T-cell (primary cell): ENCODE measurements at regions of chr14 and their contacts with region 1.

Region 1: DNA sequence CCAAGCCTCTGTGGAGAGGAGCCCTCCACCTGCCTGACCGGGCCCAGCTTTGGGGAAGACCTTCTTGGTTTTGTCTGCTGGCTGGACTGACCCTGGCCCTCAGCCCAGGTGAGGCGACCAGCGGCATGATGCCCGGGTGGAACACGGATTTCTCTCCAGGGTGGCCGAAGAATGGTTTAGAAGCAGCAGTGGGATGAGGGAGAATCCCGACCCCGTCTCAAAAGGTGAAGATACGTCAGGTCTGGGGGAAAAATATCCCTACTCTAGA is 15.7 kb downstream of the ZBTB42 start:
- DNase-seq: no peak
- ATAC-seq: no peak
- H3K4me3 ChIP-seq: peak overlapping the region; percentile 63 to 71
- H3K4me3 Mint-ChIP-seq: peak overlapping the region; percentile 86 to 90 (median 87)
- H3K27ac ChIP-seq: peak overlapping the region; percentile 76
- H3K27ac Mint-ChIP-seq: peak overlapping the region; percentile 90 to 92
- H3K4me1 ChIP-seq: peaks cover 0 to 26% of the 10 kb centered on the region in 2 experiments
- H3K4me1 Mint-ChIP-seq: peaks cover 14 to 19% (median 19%) of the 10 kb centered on the region in 3 donors
- H3K27me3 ChIP-seq: no peaks in the 10 kb centered on the region
- H3K27me3 Mint-ChIP-seq: no peaks in the 10 kb centered on the region

Region 2: DNA sequence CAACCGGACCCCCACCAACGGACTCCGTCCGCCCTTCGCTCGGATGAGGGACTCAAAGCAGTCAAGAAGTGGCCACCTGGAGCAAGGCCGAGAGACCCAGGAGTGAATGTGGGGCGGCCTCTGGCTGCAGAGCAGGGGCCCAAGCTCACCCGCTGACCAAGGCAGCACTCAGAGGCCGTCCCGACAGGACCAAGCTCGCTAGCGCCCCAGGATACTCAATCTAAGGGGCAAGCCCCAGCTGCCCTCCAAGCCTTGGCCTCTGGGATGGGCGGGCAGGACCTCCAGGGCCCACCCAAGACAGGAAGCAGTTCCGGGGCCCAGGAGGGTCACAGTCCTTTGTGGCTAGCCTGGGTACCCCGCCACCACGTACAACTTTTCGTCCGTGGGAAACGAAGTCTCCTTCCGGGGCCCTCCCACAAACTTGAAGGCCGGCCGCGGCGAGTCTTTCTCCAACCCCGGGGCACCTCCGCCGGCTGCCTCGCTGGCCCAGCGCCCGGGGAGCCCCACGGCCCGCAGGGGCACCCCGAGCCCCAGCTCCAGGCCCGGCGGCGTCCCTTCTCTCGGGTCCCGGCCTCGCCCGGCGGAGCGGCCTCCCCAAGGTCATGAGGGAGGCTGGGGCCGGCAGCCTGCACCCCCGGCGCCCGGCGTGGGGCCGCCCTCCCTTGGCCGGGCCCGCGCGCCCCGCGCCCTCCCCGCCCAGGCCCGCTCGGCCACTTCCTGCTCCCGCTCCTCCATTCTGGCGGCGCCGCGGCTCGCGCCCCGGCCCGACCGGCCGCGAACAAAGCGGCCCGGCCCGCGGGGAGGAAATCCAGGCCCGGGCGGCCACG is 21.8 kb before region 1 on chr14:
- CTCF ChIA-PET with region 1: interaction called in 1 of 2 experiments, 11 read pairs
- POLR2A ChIA-PET with region 1: no interaction called
- DNase-seq: peak in 4 of 35 experiments; percentile 19 to 53 (median 22)
- ATAC-seq: peak; percentile 29 to 46 (median 42)
- H3K4me3 ChIP-seq: peak overlapping the region; percentile 69 to 75
- H3K4me3 Mint-ChIP-seq: peak overlapping the region; percentile 83 to 91 (median 85)
- H3K27ac ChIP-seq: no peak overlapping the region
- H3K27ac Mint-ChIP-seq: peak overlapping the region; percentile 80 to 85
- H3K4me1 ChIP-seq: peaks cover 6 to 63% of the 10 kb centered on the region in 2 experiments
- H3K4me1 Mint-ChIP-seq: peaks cover 45 to 51% (median 46%) of the 10 kb centered on the region in 3 donors
- H3K27me3 ChIP-seq: no peaks in the 10 kb centered on the region
- H3K27me3 Mint-ChIP-seq: no peaks in the 10 kb centered on the region

Region 3: DNA sequence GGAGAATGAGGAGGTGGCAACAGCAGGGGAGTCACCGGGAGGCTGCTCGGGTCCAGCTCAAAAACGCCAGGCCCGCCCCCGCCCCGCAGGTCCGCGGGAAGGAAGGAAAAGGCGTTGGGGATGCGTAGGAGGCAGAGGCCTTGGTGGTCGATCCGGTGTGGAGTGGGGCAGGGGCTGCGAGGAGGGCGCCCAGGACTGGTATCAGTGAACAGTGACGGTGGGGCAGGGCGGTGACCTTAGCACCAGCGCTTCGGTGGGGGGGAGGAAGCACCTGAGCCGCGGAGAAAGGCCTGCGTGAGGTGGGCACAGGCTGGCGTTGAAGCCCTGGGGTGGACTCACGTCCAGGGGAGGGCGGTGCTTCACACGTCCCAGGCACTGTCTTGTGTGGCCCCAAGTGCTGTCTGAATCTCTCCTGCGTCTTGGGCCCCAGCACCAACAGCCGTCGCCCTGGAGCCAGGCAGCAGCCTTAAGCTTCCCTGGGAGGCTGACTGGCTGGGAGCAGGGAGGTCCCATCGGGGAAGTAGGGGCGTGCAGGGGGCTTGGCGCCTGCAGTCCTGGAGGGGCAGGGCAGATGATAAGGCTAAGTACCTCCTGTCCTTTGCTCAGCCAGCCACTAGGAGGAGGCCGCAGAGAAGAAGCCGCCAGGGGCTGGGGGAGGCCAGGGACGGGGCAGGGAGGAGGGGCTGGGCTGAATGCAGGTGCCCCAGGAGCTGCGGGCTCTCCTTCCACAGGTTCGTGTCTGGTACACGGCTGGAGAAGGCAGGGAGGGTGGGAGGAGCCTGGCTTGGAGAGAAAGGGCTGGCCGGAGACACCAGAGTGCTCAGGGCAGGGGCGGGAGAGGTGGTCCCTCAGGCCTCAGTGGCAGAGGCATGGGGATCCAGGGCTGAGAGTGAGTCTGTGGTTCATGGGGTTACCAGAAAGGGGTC is 10.8 kb after region 1 on chr14:
- CTCF ChIA-PET with region 1: no interaction called
- POLR2A ChIA-PET with region 1: no interaction called
- DNase-seq: peak in 33 of 35 experiments; percentile 21 to 69 (median 45)
- ATAC-seq: peak; percentile 48 to 70 (median 56)
- H3K4me3 ChIP-seq: peak overlapping the region; percentile 37 to 65
- H3K4me3 Mint-ChIP-seq: peak overlapping the region; percentile 75 to 94 (median 79)
- H3K27ac ChIP-seq: no peak overlapping the region
- H3K27ac Mint-ChIP-seq: peak overlapping the region in 1 of 2 donors; percentile 52
- H3K4me1 ChIP-seq: peaks cover 0 to 24% of the 10 kb centered on the region in 2 experiments
- H3K4me1 Mint-ChIP-seq: peaks cover 20 to 27% (median 25%) of the 10 kb centered on the region in 3 donors
- H3K27me3 ChIP-seq: peaks cover 0 to 29% of the 10 kb centered on the region in 2 experiments
- H3K27me3 Mint-ChIP-seq: peaks cover 0 to 15% of the 10 kb centered on the region in 2 donors

Region 4: GRCh38 chr14:104882325-104883115 is 65.9 kb after region 1 on chr14:
- CTCF ChIA-PET with region 1: no interaction called
- POLR2A ChIA-PET with region 1: no interaction called
- DNase-seq: no peak
- ATAC-seq: peak in 2 of 4 experiments; percentile 27 to 44
- H3K4me3 ChIP-seq: no peak overlapping the region
- H3K4me3 Mint-ChIP-seq: no peak overlapping the region
- H3K27ac ChIP-seq: no peak overlapping the region
- H3K27ac Mint-ChIP-seq: no peak overlapping the region
- H3K4me1 ChIP-seq: no peaks in the 10 kb centered on the region
- H3K4me1 Mint-ChIP-seq: no peaks in the 10 kb centered on the region
- H3K27me3 ChIP-seq: peaks cover 0 to 3% of the 10 kb centered on the region in 2 experiments
- H3K27me3 Mint-ChIP-seq: no peaks in the 10 kb centered on the region